ENCODE measurements at regions of chr7 and their contacts with region 1.

Region 1: DNA sequence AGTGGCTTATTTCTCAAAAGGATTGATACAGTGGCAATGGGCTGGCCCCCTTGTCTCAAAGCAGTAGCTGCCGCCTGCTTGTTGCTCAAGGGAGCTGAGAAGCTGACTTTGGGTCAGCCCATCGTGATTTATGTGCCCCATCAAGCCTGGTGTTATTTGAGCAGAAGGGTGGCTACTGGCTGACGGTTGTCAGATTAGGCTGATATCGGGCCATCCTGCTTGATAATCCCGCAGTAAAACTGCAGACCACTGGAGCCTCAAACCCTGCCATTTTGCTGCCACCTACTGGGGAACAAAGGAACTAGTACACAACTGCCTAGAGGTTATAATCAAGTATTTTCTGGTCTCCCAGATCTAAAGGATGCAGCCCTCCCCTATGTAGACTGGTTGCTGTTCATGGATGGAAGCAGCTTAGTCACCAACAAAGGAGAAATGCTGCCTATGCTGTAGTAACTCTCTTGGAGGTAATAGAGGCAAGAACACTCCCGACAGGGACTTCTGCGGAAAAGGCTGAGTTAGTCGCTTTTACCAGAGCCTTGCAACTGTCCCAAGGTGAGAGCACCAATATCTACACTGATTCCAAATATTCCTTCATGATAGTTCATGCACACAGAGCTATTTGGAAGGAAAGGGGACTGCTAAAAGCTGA is 65.9 kb upstream of the ZNF92 start:
- DNase-seq: no peak
- ATAC-seq: peak; percentile 64

Region 2: DNA sequence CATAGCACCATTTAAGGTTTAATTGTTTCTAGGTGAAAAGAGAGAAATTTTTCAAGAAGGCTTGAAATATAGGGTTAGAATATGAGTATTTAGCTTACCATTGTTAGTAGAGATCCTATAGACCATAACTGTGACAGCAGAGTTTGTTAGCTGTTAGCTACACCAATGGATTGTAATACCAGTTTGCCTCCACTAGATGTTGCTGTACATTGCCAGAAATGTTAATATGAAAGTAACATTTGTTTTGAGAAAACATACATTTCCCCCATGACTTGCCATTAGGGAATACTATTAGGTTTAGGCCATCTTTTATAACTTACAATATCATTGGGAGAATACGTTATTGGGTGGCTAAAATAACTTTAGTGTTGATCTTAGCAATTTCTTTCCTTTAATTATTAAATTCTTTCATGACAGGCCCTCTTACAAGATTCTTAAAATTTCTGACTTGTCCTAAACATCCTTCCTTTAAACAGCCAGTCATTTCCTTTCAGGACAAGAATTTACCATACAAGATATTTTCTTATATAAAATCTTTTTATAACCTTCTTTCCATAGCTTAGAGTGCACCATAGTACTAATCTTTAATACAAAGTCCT is 356.4 kb before region 1 on chr7:
- intact Hi-C with region 1: loop called (anchors 5 kb)
- DNase-seq: no peak
- ATAC-seq: peak; percentile 63

Region 3: GRCh38 chr7:65379318-65379717 is 71.5 kb after region 1 on chr7:
- intact Hi-C with region 1: no loop called
- DNase-seq: no peak
- ATAC-seq: peak; percentile 27

Region 4: DNA sequence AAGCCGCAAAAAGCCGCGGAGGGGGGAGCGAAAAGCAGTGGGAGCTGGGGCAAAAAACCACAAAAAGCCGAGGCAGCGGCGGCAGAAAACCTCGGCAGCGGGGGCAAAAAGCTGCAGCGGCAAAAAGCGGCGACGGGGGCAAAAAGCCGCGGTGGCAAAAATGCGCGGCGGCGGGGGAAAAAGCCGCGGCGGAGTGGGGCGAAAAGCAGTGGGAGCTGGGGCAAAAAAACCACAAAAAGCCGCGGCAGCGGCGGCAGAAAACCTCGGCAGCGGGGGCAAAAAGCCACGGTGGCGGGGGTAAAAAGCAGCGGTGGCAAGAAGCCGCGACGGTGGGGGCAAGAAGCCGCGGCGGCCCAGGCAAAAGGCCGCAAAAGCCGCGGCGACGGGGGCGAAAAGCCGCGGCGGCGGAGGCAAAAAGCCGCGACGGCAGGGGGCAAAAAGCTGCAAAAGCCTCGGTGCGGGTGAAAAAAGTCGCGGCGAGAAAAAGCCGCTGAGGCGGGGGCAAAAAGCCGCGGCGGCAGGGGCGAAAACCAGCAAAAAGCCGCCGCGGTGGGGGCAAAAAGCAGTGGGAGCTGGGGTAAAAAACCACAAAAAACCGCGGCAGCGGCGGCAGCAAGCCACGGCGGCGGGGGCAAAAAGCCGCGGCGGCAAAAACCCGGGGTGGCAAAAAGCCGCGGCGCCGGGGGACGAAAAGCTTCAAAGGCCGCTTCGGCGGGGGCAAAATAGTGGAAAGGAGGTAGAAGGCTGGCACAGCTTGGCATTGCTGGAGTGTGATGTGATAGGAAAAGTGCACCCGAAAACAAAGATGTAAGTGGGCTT is 201.8 kb after region 1 on chr7:
- intact Hi-C with region 1: no loop called
- DNase-seq: peak; percentile 17
- ATAC-seq: no peak

Measured in Right ventricle myocardium superior (tissue), 1 donor.